HepG2 (cell line): ENCODE measurements at regions of chr2 and their contacts with region 1.

Region 1: GRCh38 chr2:102801098-102801718 is 39.4 kb downstream of the TMEM182 start:
- DNase-seq: no peak
- ATAC-seq: no peak
- H3K4me3 ChIP-seq: no peak overlapping the region
- H3K27ac ChIP-seq: no peak overlapping the region
- H3K4me1 ChIP-seq: peaks cover 37% of the 10 kb centered on the region
- H3K27me3 ChIP-seq: no peaks in the 10 kb centered on the region
- CTCF ChIP-seq: no peak
- EP300 ChIP-seq: no peak
- POLR2A ChIP-seq: no peak
- RAD21 ChIP-seq: no peak

Region 2: DNA sequence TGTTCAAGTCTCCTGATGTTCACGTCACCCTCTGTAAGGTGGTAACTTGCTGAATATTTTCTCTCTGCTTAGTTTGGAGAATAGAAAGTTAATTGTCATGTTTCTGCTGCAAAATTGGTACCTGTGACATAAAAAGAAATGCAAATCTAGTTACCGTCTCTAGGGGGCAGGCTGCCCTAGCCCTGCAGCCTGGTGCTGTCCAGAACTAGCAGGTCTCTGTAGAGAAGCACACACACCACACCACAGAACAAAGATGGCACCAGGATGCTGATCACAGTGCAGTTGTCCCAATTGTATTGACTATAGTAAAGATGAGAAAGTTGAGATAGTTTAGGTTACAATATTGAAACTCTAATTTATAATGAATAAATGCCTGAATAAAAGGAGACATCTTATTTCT is 281.2 kb before region 1 on chr2:
- CTCF ChIA-PET with region 1: interaction called, 7 read pairs
- POLR2A ChIA-PET with region 1: no interaction called
- in situ Hi-C with region 1: no loop called
- intact Hi-C with region 1: loop called (anchors 5 kb)
- DNase-seq: peak; percentile 56
- ATAC-seq: peak; percentile 92
- H3K4me3 ChIP-seq: no peak overlapping the region
- H3K27ac ChIP-seq: no peak overlapping the region
- H3K4me1 ChIP-seq: peaks cover 16% of the 10 kb centered on the region
- H3K27me3 ChIP-seq: no peaks in the 10 kb centered on the region; a peak in 1 of 5 replicates
- CTCF ChIP-seq: peak; percentile 84
- EP300 ChIP-seq: no peak
- POLR2A ChIP-seq: no peak
- RAD21 ChIP-seq: peak; percentile 63

Region 3: DNA sequence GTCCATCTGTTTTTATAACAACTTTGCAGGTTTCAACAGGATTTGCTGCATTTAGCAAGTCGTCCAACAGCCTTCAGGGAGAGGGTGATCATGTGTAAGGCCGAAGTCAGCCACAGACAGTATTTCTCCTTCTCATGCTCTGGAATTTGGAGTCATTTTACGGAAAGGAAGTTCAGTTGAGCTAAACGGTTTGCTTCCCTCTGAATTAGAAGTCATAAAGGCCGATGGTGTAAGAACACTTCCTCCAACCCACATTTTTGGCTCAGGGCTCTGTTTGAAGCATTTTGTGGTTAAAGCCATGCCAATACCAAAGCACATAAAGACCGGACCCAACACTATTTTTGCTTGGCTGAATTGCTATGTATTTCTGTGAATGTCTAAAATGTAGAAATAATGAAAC is 90.1 kb after region 1 on chr2:
- CTCF ChIA-PET with region 1: no interaction called
- POLR2A ChIA-PET with region 1: no interaction called
- in situ Hi-C with region 1: no loop called
- intact Hi-C with region 1: no loop called
- DNase-seq: no peak
- ATAC-seq: no peak
- H3K4me3 ChIP-seq: no peak overlapping the region
- H3K27ac ChIP-seq: no peak overlapping the region
- H3K4me1 ChIP-seq: no peaks in the 10 kb centered on the region
- H3K27me3 ChIP-seq: peaks cover 0 to 16% of the 10 kb centered on the region in 2 experiments; a peak in 3 of 5 replicates
- CTCF ChIP-seq: no peak
- EP300 ChIP-seq: no peak
- POLR2A ChIP-seq: no peak
- RAD21 ChIP-seq: no peak